Psoas muscle (tissue), 8 donors: ENCODE measurements at regions of chr9 and their contacts with region 1.

Region 1: DNA sequence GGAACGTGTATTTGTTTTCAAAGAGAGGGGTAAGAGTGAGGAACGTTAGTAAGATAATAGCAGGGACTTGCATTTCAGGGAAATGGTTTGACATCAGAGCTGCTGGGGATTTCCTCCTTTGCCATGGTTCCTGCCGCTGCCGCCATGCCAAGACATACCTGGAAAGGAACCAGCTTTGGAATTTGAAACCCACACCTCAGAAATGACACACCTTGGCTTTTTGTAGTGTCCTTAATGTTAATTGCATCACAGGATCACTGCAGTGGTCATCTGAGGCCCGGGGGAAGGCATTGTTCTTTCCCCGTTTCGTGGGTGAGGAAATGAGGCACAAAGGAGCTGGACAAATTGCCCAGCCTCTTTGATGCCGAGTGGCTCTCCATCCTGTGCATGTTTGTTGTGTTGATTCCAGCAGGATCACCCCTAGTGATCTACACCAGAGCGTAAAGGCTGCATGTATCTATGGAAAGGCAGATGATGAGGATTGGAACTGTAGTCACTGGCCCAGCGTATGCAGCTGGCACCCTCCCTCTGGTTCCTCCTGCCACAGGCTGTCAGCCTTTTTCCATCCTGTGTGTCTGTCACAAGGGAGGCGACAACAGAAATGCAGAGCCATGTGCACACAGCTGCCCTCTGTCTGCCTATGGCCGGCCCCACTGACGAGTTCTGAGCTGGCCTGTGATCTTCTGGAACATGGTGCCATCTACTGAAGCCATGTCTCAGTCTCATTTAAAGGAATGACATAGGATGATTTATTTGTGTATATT is 37.8 kb downstream of the SLC46A2 start:
- DNase-seq: peak in 1 of 2 donors; percentile 63
- ATAC-seq: peak; percentile 83 to 94 (median 91)
- H3K4me3 ChIP-seq: no peak overlapping the region
- H3K27ac ChIP-seq: peak overlapping the region; percentile 48
- H3K4me1 ChIP-seq: peaks cover 20% of the 10 kb centered on the region
- H3K27me3 ChIP-seq: no peaks in the 10 kb centered on the region
- CTCF ChIP-seq: no peak

Region 2: DNA sequence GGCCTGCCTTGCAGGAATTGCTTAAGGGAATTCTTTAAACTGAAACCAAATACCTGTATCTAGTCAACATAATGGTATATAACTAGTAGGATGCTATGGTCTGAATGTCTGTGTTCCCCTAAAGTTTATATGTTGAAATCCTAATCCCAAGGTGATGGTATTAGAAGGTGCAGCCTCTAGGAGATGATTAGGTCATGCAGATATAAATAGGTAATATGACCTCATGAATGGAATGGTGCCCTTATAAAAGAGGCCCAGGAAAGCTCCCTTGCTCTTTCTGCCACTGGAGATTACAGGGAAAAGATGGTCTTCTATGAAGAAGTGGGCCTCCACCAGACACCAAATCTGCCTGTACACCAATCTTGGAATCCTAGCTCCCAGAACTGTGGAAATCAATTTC is 373.7 kb before region 1 on chr9:
- intact Hi-C with region 1: no loop called
- DNase-seq: no peak
- ATAC-seq: peak; percentile 71 to 93 (median 88)
- H3K4me3 ChIP-seq: no peak overlapping the region
- H3K27ac ChIP-seq: peak overlapping the region; percentile 60
- H3K4me1 ChIP-seq: no peaks in the 10 kb centered on the region
- H3K27me3 ChIP-seq: no peaks in the 10 kb centered on the region
- CTCF ChIP-seq: no peak

Region 3: GRCh38 chr9:112887381-112887780 is 34.5 kb after region 1 on chr9:
- intact Hi-C with region 1: loop called in 1 of 2 experiments (anchors 5 kb)
- DNase-seq: no peak
- ATAC-seq: no peak
- H3K4me3 ChIP-seq: no peak overlapping the region
- H3K27ac ChIP-seq: no peak overlapping the region
- H3K4me1 ChIP-seq: no peaks in the 10 kb centered on the region
- H3K27me3 ChIP-seq: no peaks in the 10 kb centered on the region
- CTCF ChIP-seq: no peak